ENCODE measurements at regions of chr4 and their contacts with region 1.

Region 1: DNA sequence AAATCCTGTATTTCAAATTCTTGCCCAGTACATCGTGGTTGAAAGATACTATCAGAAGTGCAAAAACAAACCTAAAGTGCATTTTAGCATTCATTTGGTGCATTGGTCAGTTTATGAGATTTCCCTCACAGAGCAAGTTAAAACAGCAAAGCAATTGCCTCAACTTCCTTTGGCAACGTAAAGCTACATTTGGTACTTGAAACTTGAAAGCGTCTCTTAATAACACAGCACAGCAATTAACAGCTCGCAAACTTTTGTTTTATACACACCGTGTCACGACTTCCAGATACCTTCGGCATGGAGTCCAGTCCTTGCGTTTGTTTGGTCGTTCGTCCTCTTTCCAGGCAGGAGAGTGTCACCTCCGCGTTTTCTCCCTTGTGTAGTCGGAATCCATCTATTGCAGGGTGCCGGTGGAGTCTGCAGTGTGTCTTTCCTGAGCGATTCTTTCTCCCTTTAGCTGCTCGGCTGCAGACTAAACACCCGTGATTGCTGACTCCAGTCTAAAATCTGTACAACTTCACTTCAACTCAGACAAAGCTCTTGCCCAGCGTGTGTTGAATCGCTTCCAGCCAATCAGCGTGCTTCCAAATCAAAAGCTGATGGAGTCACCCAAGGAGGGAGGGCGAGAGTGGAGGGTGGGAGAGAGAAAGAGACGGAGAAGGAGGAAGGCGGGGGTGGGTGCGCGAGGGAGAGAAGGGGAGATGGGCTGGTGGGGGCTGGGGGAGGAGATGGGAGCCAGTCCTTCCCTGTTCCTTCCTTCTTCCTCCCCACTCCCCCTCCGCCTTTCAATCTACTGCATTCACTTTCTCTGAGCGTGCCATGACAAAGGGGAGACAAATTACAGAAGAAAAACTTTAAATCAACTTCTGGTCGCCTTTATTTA is at the start of gene PCDH18:
- DNase-seq: peak; percentile 97
- H3K4me3 ChIP-seq: peak within 1 kb of the TSS; percentile 52 to 70 (median 63)
- H3K27ac ChIP-seq: peak within 1 kb of the TSS; percentile 80 to 87 (median 85)
- H3K4me1 ChIP-seq: peaks cover 0 to 17% (median 12%) of the 10 kb centered on the region in 4 donors
- H3K27me3 ChIP-seq: no peaks in the 10 kb centered on the region
- CTCF ChIP-seq: no peak
- EP300 ChIP-seq: no peak
- POLR2A ChIP-seq: peak in 1 of 2 donors; percentile 66
- total RNA-seq, gene PCDH18: 64.6 to 108 (median 70.4) TPM

Region 2: GRCh38 chr4:137124278-137124932 is 407.8 kb before region 1 on chr4:
- intact Hi-C with region 1: loop called (anchors 5 kb)
- DNase-seq: no peak
- H3K4me3 ChIP-seq: peak overlapping the region; percentile 17 to 44 (median 38)
- H3K27ac ChIP-seq: no peak overlapping the region
- H3K4me1 ChIP-seq: no peaks in the 10 kb centered on the region
- H3K27me3 ChIP-seq: no peaks in the 10 kb centered on the region
- CTCF ChIP-seq: peak; percentile 16 to 59 (median 46)
- EP300 ChIP-seq: no peak
- POLR2A ChIP-seq: no peak

Region 3: GRCh38 chr4:137370206-137370633 is 162.0 kb before region 1 on chr4:
- intact Hi-C with region 1: loop called (anchors 5 kb)
- DNase-seq: no peak
- H3K4me3 ChIP-seq: no peak overlapping the region
- H3K27ac ChIP-seq: peak overlapping the region; percentile 10 to 67 (median 62)
- H3K4me1 ChIP-seq: peaks cover 0 to 44% (median 23%) of the 10 kb centered on the region in 4 donors
- H3K27me3 ChIP-seq: no peaks in the 10 kb centered on the region
- CTCF ChIP-seq: no peak
- EP300 ChIP-seq: no peak
- POLR2A ChIP-seq: no peak

Region 4: DNA sequence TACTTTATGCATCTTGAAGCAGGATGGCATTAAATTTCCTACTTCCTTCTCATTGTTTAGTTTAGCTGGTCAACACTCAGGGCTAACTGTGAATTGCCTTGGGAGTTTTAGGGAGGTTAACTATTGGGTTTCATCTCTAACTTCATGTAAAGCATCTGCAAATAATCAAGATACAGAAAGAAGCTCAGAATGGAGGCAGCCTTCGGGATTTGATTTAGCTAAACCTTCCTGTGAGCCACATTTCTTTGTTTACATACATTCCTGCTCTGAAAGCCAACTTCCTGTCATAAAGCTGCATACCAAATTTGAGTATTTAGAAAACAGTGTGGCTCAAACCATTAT is 131.8 kb after region 1 on chr4:
- intact Hi-C with region 1: loop called (anchors 5 kb)
- DNase-seq: no peak
- H3K4me3 ChIP-seq: peak overlapping the region in 2 of 4 donors; percentile 2 to 5
- H3K27ac ChIP-seq: peak overlapping the region; percentile 75 to 83 (median 81)
- H3K4me1 ChIP-seq: peaks cover 0 to 59% (median 35%) of the 10 kb centered on the region in 4 donors
- H3K27me3 ChIP-seq: no peaks in the 10 kb centered on the region
- CTCF ChIP-seq: no peak
- EP300 ChIP-seq: no peak
- POLR2A ChIP-seq: no peak

Region 5: GRCh38 chr4:137861682-137862081 is 329.5 kb after region 1 on chr4:
- intact Hi-C with region 1: loop called (anchors 5 kb)
- DNase-seq: no peak
- H3K4me3 ChIP-seq: no peak overlapping the region
- H3K27ac ChIP-seq: no peak overlapping the region
- H3K4me1 ChIP-seq: no peaks in the 10 kb centered on the region
- H3K27me3 ChIP-seq: no peaks in the 10 kb centered on the region
- CTCF ChIP-seq: peak in 3 of 4 experiments; percentile 11 to 47 (median 20)
- EP300 ChIP-seq: no peak
- POLR2A ChIP-seq: no peak